Panc1 (cell line): ENCODE measurements at regions of chr5 and their contacts with region 1.

Region 1: DNA sequence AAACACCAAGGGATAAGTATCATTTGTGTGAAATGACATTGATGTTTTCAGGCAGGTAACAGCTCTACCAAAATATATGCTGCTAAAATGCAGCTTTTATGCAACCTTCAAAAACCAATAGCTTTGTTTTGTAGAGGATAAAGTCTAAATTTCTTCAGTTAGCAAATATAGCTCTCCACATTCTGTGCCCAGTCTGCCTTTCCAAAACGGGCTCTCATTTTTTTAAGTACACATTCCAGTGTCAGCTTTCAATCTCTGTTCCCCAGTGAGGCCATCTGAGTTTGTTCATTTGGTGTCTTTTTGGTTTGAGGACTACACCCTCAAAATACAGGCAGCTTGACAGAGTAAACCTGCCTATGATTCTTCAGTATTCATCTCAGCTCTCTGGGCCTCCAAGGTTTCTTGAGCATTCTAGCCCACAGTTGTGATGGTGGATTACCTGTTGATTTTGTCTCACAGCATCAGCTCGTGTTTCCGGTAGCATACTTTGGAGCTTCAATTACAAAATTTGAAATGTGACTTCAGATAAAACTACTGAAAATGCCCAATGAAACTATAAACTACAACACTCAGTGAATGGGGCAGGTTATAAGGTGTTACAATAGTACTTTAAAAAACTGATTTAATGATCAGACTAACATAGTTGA is 55.7 kb downstream of the NR3C1 start:
- DNase-seq: no peak
- ATAC-seq: no peak
- H3K4me3 ChIP-seq: no peak overlapping the region
- H3K27ac ChIP-seq: no peak overlapping the region
- H3K4me1 ChIP-seq: peaks cover 42% of the 10 kb centered on the region
- H3K27me3 ChIP-seq: no peaks in the 10 kb centered on the region
- CTCF ChIP-seq: no peak

Region 2: DNA sequence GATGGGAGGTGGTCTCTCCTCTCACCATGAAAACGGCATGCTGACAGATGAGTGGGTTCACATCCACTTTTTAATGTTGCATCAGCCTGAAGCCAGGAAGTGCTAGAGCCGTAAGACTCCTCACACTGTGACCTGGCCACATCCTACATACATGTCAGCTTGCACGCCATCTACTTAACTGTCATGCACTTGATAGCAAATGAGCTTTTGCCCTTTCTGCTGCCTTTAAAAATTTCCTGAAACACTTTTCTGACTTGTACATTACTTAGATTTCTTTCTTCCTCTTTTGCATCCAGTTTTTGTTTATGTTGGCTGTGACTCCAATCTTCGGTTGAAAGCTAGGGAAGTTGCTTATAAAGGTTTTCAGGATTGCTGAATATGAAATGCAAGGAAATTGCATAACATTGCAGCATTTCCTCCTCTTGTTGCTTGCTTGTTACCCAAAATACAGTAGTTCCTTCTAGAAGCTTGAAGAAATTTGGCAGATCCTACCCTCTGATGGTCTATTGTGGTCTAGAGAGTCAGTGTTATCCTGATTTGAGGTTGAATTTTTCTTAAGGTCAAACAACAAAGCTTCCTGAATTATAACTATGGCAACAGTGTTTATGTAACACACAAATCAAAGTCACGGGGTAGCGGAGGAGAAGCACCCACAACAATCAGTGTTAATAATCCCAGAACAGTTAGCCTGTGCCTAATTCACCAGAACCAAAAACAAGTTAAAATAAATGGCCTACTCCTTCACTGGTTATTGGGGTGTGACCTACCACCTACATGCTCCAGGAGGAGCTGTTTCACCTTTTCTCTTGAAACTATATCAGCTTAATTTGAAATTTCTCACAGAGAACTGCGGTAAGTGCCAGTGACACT is 345.1 kb before region 1 on chr5:
- CTCF ChIA-PET with region 1: no interaction called
- POLR2A ChIA-PET with region 1: interaction called, 14 read pairs
- in situ Hi-C with region 1: no loop called
- intact Hi-C with region 1: no loop called
- DNase-seq: no peak
- ATAC-seq: no peak; the same call in 1 of the 2 replicates
- H3K4me3 ChIP-seq: no peak overlapping the region
- H3K27ac ChIP-seq: peak overlapping the region; percentile 72
- H3K4me1 ChIP-seq: peaks cover 10% of the 10 kb centered on the region
- H3K27me3 ChIP-seq: no peaks in the 10 kb centered on the region
- CTCF ChIP-seq: peak; percentile 66

Region 3: GRCh38 chr5:143311428-143311827 is 36.4 kb before region 1 on chr5:
- CTCF ChIA-PET with region 1: no interaction called
- POLR2A ChIA-PET with region 1: interaction called, 11 read pairs
- in situ Hi-C with region 1: no loop called
- intact Hi-C with region 1: no loop called
- DNase-seq: peak; percentile 50
- ATAC-seq: peak; percentile 68; the same call in 1 of the 2 replicates
- H3K4me3 ChIP-seq: no peak overlapping the region
- H3K27ac ChIP-seq: peak overlapping the region; percentile 4; the same call in 1 of the 2 replicates
- H3K4me1 ChIP-seq: peaks cover 26% of the 10 kb centered on the region
- H3K27me3 ChIP-seq: no peaks in the 10 kb centered on the region
- CTCF ChIP-seq: no peak

Region 4: DNA sequence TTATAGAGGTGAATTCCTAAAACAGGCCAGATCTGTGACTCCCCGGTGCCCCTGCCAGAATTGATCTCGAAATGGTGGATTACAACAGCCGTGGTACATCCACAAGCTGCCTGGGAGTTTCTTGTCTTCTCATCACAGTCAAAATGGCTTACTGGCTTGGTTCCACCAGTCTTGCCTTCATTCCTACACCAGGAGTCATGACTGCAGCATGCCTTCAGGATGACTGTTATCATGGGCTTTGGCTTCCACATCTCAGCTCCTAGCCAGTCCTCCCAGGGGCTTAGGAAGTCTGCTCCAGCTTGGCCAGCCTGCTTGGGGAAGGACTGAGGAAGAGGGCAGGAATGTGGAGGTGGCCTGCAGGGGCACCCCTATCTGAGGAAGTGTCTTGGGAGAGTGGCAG is 188.5 kb after region 1 on chr5:
- CTCF ChIA-PET with region 1: no interaction called
- POLR2A ChIA-PET with region 1: no interaction called
- in situ Hi-C with region 1: no loop called
- intact Hi-C with region 1: no loop called
- DNase-seq: peak; percentile 10
- ATAC-seq: peak; percentile 83
- H3K4me3 ChIP-seq: no peak overlapping the region
- H3K27ac ChIP-seq: no peak overlapping the region
- H3K4me1 ChIP-seq: no peaks in the 10 kb centered on the region
- H3K27me3 ChIP-seq: no peaks in the 10 kb centered on the region
- CTCF ChIP-seq: no peak